ENCODE measurements at regions of chr17 and their contacts with region 1.

Region 1: GRCh38 chr17:28612936-28613872 is 781 bp downstream of the RSKR start:
- DNase-seq: peak; percentile 43
- H3K4me3 ChIP-seq: no peak overlapping the region
- H3K27ac ChIP-seq: peak overlapping the region in 1 of 8 donors; percentile 31
- H3K4me1 ChIP-seq: peaks cover 0 to 31% (median 6%) of the 10 kb centered on the region in 6 donors
- H3K27me3 ChIP-seq: no peaks in the 10 kb centered on the region
- CTCF ChIP-seq: peak in 10 of 11 experiments; percentile 24 to 75 (median 65)
- POLR2A ChIP-seq: no peak

Region 2: GRCh38 chr17:27282054-27282551 is 1331.1 kb before region 1 on chr17:
- intact Hi-C with region 1: no loop called
- DNase-seq: no peak
- H3K4me3 ChIP-seq: peak overlapping the region in 1 of 8 donors; percentile 21
- H3K27ac ChIP-seq: peak overlapping the region; percentile 7 to 90 (median 86)
- H3K4me1 ChIP-seq: peaks cover 14 to 76% (median 56%) of the 10 kb centered on the region in 6 donors
- H3K27me3 ChIP-seq: no peaks in the 10 kb centered on the region
- CTCF ChIP-seq: no peak
- POLR2A ChIP-seq: no peak

Region 3: GRCh38 chr17:28174352-28174964 is 438.7 kb before region 1 on chr17:
- intact Hi-C with region 1: no loop called
- DNase-seq: no peak
- H3K4me3 ChIP-seq: no peak overlapping the region
- H3K27ac ChIP-seq: no peak overlapping the region
- H3K4me1 ChIP-seq: peaks cover 0 to 21% (median 9%) of the 10 kb centered on the region in 6 donors
- H3K27me3 ChIP-seq: no peaks in the 10 kb centered on the region
- CTCF ChIP-seq: no peak
- POLR2A ChIP-seq: no peak

Region 4: GRCh38 chr17:28547623-28548416 is 65.4 kb before region 1 on chr17:
- intact Hi-C with region 1: loop called (anchors 5 kb)
- DNase-seq: peak; percentile 92
- H3K4me3 ChIP-seq: peak overlapping the region in 2 of 8 donors; percentile 7 to 51
- H3K27ac ChIP-seq: peak overlapping the region; percentile 58 to 90 (median 86)
- H3K4me1 ChIP-seq: peaks cover 38 to 63% (median 56%) of the 10 kb centered on the region in 6 donors
- H3K27me3 ChIP-seq: no peaks in the 10 kb centered on the region
- CTCF ChIP-seq: peak; percentile 89 to 99 (median 96)
- POLR2A ChIP-seq: no peak

Region 5: GRCh38 chr17:28657756-28658155 is 44.6 kb after region 1 on chr17:
- intact Hi-C with region 1: no loop called
- DNase-seq: no peak
- H3K4me3 ChIP-seq: no peak overlapping the region
- H3K27ac ChIP-seq: peak overlapping the region in 1 of 8 donors; percentile 18
- H3K4me1 ChIP-seq: peaks cover 14 to 53% (median 22%) of the 10 kb centered on the region in 6 donors
- H3K27me3 ChIP-seq: no peaks in the 10 kb centered on the region
- CTCF ChIP-seq: no peak
- POLR2A ChIP-seq: no peak

Region 6: DNA sequence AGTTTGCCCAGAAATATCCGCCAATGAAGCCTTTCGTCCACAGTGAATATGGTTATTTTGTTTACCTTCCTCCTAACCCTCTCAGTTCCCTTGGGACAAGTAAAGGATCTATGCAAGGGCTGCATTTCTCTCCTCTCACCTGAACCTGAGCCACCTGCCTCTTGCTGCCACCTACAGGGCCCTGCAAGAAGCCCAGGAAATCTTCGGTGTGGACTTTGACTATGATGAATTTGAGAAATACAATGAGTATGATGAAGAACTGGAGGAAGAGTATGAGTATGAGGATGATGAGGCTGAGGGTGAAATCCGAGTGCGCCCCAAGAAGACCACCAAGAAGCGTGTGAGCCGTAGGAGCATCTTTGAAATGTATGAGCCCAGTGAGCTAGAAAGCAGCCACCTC is 62.8 kb after region 1 on chr17:
- intact Hi-C with region 1: no loop called
- DNase-seq: no peak
- H3K4me3 ChIP-seq: no peak overlapping the region
- H3K27ac ChIP-seq: no peak overlapping the region
- H3K4me1 ChIP-seq: no peaks in the 10 kb centered on the region
- H3K27me3 ChIP-seq: no peaks in the 10 kb centered on the region
- CTCF ChIP-seq: peak in 2 of 11 experiments; percentile 14 to 19
- POLR2A ChIP-seq: no peak

Measured in spleen (tissue), 13 donors.